ENCODE measurements at regions of chr17 and their contacts with region 1.

Region 1: GRCh38 chr17:14460516-14461226 is 159.8 kb downstream of the HS3ST3B1 start:
- DNase-seq: no peak
- ATAC-seq: no peak
- H3K4me3 Mint-ChIP-seq: no peak overlapping the region
- H3K27ac Mint-ChIP-seq: no peak overlapping the region
- H3K4me1 Mint-ChIP-seq: peaks cover 16% of the 10 kb centered on the region
- H3K27me3 Mint-ChIP-seq: no peaks in the 10 kb centered on the region

Region 2: GRCh38 chr17:14525551-14526455 is 65.1 kb after region 1 on chr17:
- CTCF ChIA-PET with region 1: no interaction called
- POLR2A ChIA-PET with region 1: no interaction called
- intact Hi-C with region 1: loop called in 1 of 2 experiments (anchors 10 kb)
- DNase-seq: no peak
- ATAC-seq: no peak
- H3K4me3 Mint-ChIP-seq: no peak overlapping the region
- H3K27ac Mint-ChIP-seq: no peak overlapping the region
- H3K4me1 Mint-ChIP-seq: peaks cover 14% of the 10 kb centered on the region
- H3K27me3 Mint-ChIP-seq: no peaks in the 10 kb centered on the region